ENCODE measurements at regions of chr6 and their contacts with region 1.

Region 1: DNA sequence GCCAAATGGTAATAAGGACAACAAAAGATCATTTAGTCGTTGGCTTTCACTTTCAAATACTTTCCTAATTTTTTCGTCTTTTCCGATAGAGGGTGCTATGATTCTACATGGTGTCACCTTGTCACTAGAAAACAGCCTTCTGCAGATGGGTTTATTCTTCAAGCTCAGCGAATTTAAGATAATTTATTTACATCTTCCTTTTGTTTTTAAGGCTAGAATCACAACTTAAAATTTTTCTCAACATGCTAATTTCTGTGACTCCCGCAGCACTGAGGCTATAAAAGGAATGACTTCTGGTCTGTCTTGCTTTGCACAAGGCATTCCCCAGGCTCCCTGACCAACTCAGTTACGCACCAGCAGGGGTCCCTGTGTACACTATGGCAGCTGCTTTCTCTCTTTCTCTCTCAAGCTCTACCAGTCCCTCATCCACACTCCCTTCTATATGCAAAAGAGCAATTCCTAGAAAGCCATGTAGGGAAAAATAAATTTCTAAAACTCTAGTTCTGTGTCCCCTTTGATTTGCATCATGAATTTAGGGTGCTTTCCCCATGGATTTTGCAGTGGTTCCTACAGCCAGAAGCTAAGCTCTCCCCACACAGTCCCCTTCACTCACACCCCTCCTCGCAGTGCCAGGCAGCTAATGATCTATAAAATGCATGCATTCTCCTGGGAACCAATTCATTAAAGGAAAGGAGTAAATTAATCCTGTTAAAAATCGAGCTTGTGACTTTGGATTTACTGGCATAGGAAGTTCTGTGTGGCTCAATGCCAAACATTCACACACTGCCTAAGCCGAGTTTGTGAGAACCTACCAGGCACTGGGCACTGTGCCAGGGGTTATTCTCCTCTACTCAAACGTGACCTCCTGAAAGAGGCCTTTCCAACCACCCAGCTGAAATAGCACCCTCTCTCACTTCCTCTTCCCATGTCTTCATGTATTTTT is 74.5 kb downstream of the DCDC2 start:
- DNase-seq: peak; percentile 79 to 81
- H3K4me3 ChIP-seq: peak overlapping the region; percentile 8; the same call in 1 of the 2 replicates
- H3K4me3 Mint-ChIP-seq: no peak overlapping the region
- H3K27ac Mint-ChIP-seq: no peak overlapping the region
- H3K4me1 ChIP-seq: peaks cover 5% of the 10 kb centered on the region; the same call in 1 of the 2 replicates
- H3K4me1 Mint-ChIP-seq: no peaks in the 10 kb centered on the region
- H3K27me3 ChIP-seq: no peaks in the 10 kb centered on the region
- H3K27me3 Mint-ChIP-seq: no peaks in the 10 kb centered on the region
- CTCF ChIP-seq: peak; percentile 85

Region 2: GRCh38 chr6:24323632-24324337 is 40.5 kb after region 1 on chr6:
- CTCF ChIA-PET with region 1: no interaction called
- POLR2A ChIA-PET with region 1: no interaction called
- intact Hi-C with region 1: loop called (anchors 1 kb)
- DNase-seq: no peak
- H3K4me3 ChIP-seq: no peak overlapping the region
- H3K4me3 Mint-ChIP-seq: peak overlapping the region; percentile 28
- H3K27ac Mint-ChIP-seq: peak overlapping the region; percentile 45
- H3K4me1 ChIP-seq: peaks cover 83% of the 10 kb centered on the region
- H3K4me1 Mint-ChIP-seq: peaks cover 57% of the 10 kb centered on the region
- H3K27me3 ChIP-seq: no peaks in the 10 kb centered on the region
- H3K27me3 Mint-ChIP-seq: no peaks in the 10 kb centered on the region
- CTCF ChIP-seq: no peak

Region 3: DNA sequence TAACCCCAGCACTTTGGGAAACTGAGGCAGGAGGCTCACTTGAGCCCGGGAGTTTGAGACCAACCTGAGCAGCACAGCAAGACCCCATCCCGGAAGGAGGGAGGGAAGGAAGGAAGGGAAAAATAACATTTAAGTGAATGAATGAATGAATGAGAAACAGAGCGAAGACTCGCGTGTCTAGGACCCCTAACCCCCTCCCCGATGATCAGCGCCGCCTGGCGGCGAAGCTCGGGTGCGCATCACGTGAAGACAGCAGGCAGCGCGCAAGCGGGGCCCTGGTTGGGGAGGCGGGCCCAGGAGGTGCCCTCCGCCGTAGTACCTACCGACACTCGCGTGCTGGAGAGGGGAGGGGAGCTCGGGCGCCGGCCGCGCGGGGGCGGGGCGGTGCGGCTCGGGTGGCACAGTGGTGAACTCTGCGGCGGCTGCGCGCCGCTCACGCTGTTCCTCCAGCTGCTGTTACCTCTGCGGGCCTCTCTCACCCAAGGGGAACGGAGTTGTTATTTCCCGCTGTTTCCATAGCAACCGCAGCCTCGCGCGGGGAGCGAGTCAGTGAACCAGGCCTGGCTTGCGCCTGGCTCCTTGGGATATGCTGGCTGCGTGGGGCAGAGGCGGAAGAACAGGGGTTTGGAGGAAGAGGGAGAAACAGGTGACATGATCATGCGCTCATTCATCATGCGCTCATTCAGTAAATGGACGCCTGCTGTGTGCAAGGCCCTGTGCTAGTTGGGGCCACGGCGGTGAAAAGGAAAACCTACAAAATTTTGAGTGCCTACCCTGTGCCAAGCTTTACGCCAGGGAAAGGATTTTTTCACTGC is 76.5 kb after region 1 on chr6:
- CTCF ChIA-PET with region 1: interaction called, 34 read pairs
- POLR2A ChIA-PET with region 1: no interaction called
- intact Hi-C with region 1: loop called (anchors 1 kb)
- DNase-seq: peak; percentile 93 to 94
- H3K4me3 ChIP-seq: peak overlapping the region; percentile 47
- H3K4me3 Mint-ChIP-seq: peak overlapping the region; percentile 76
- H3K27ac Mint-ChIP-seq: peak overlapping the region; percentile 96
- H3K4me1 ChIP-seq: peaks cover 14% of the 10 kb centered on the region; the same call in 1 of the 2 replicates
- H3K4me1 Mint-ChIP-seq: peaks cover 8% of the 10 kb centered on the region
- H3K27me3 ChIP-seq: no peaks in the 10 kb centered on the region
- H3K27me3 Mint-ChIP-seq: no peaks in the 10 kb centered on the region
- CTCF ChIP-seq: peak; percentile 88

Region 4: GRCh38 chr6:24394780-24395437 is 111.6 kb after region 1 on chr6:
- CTCF ChIA-PET with region 1: interaction called, 20 read pairs
- POLR2A ChIA-PET with region 1: no interaction called
- intact Hi-C with region 1: loop called (anchors 1 kb)
- DNase-seq: no peak
- H3K4me3 ChIP-seq: no peak overlapping the region
- H3K4me3 Mint-ChIP-seq: no peak overlapping the region
- H3K27ac Mint-ChIP-seq: no peak overlapping the region
- H3K4me1 ChIP-seq: peaks cover 7% of the 10 kb centered on the region
- H3K4me1 Mint-ChIP-seq: peaks cover 14% of the 10 kb centered on the region
- H3K27me3 ChIP-seq: no peaks in the 10 kb centered on the region
- H3K27me3 Mint-ChIP-seq: no peaks in the 10 kb centered on the region
- CTCF ChIP-seq: no peak

Measured in Caco-2 (cell line).